OCI-LY7 (cell line): ENCODE measurements at regions of chr1 and their contacts with region 1.

Region 1: DNA sequence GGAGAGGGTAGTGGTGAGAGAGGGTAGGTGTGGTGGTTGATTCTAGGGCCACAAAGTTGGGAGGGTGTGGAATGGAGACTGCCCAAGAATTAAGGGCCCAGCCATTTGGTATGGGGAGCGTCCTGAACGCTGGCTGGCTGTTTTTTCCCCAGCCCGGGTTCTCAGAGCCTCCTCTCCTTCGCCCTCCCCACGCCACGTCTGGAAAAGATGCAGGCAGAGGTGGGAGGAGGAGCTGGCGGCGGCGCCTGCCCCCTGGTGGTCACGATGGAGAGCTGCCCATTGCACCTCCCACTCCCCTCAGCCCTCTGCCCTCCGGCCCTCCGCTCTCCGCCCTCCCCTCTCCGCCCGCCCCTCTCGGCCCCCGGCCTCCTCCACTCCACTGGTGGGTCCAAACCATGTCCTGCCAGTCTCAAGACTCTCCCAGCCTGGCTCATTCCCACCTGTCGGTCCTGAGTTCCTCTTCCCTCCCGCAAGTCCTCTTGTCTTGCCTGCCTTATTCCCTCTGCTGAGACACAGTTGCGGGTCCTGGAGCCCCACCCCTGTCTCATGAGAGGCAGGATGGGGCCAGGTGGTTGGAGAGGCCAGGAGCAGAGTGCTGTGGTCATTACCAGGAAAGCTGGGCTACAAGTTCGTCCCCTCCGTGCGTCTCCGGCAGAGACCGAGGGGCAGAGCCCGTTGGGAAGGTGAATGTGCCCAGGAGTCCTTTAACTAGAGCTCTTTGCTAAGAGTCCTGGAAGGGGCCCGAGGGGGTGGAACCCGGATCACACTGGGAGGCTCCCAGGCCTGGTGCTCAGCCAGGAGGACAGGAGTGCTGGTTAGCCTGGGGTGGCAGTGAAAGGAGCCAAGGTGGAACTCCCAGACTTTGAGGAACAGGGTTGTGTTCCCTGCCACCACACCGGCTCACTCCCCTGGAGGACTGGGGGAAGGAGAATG is 22.6 kb downstream of the ETNK2 start:
- DNase-seq: peak; percentile 70
- H3K4me3 ChIP-seq: no peak overlapping the region
- H3K27ac ChIP-seq: no peak overlapping the region
- H3K4me1 ChIP-seq: peaks cover 4% of the 10 kb centered on the region
- CTCF ChIP-seq: peak; percentile 88

Region 2: GRCh38 chr1:203304919-203305808 is 824.1 kb before region 1 on chr1 and contains the start of gene BTG2:
- CTCF ChIA-PET with region 1: no interaction called
- POLR2A ChIA-PET with region 1: no interaction called
- intact Hi-C with region 1: no loop called
- DNase-seq: peak; percentile 91
- H3K4me3 ChIP-seq: peak within 1 kb of the TSS; percentile 96
- H3K27ac ChIP-seq: peak within 1 kb of the TSS; percentile 98
- H3K4me1 ChIP-seq: peaks cover 66% of the 10 kb centered on the region
- CTCF ChIP-seq: no peak
- total RNA-seq, gene BTG2: 146 and 156 TPM in 2 replicates

Region 3: GRCh38 chr1:203625628-203626019 is 503.6 kb before region 1 on chr1:
- CTCF ChIA-PET with region 1: interaction called, 5 read pairs
- POLR2A ChIA-PET with region 1: no interaction called
- intact Hi-C with region 1: loop called (anchors 5 kb)
- DNase-seq: peak; percentile 77
- H3K4me3 ChIP-seq: peak overlapping the region; percentile 74
- H3K27ac ChIP-seq: peak overlapping the region; percentile 78
- H3K4me1 ChIP-seq: peaks cover 48% of the 10 kb centered on the region
- CTCF ChIP-seq: peak; percentile 78

Region 4: GRCh38 chr1:203871107-203871875 is 257.9 kb before region 1 on chr1:
- CTCF ChIA-PET with region 1: interaction called, 9 read pairs
- POLR2A ChIA-PET with region 1: interaction called, 6 read pairs
- intact Hi-C with region 1: loop called (anchors 1 kb)
- DNase-seq: peak; percentile 72
- H3K4me3 ChIP-seq: no peak overlapping the region
- H3K27ac ChIP-seq: no peak overlapping the region
- H3K4me1 ChIP-seq: no peaks in the 10 kb centered on the region
- CTCF ChIP-seq: peak; percentile 91

Region 5: GRCh38 chr1:203930331-203930730 is 198.9 kb before region 1 on chr1:
- CTCF ChIA-PET with region 1: no interaction called
- POLR2A ChIA-PET with region 1: no interaction called
- intact Hi-C with region 1: loop called (anchors 2 kb)
- DNase-seq: no peak
- H3K4me3 ChIP-seq: no peak overlapping the region
- H3K27ac ChIP-seq: no peak overlapping the region
- H3K4me1 ChIP-seq: peaks cover 37% of the 10 kb centered on the region
- CTCF ChIP-seq: no peak

Region 6: GRCh38 chr1:204065174-204065985 is 63.9 kb before region 1 on chr1:
- CTCF ChIA-PET with region 1: no interaction called
- POLR2A ChIA-PET with region 1: no interaction called
- intact Hi-C with region 1: loop called (anchors 2 kb)
- DNase-seq: no peak
- H3K4me3 ChIP-seq: no peak overlapping the region
- H3K27ac ChIP-seq: no peak overlapping the region
- H3K4me1 ChIP-seq: no peaks in the 10 kb centered on the region
- CTCF ChIP-seq: no peak